ENCODE measurements at regions of chr3 and their contacts with region 1.

Region 1: DNA sequence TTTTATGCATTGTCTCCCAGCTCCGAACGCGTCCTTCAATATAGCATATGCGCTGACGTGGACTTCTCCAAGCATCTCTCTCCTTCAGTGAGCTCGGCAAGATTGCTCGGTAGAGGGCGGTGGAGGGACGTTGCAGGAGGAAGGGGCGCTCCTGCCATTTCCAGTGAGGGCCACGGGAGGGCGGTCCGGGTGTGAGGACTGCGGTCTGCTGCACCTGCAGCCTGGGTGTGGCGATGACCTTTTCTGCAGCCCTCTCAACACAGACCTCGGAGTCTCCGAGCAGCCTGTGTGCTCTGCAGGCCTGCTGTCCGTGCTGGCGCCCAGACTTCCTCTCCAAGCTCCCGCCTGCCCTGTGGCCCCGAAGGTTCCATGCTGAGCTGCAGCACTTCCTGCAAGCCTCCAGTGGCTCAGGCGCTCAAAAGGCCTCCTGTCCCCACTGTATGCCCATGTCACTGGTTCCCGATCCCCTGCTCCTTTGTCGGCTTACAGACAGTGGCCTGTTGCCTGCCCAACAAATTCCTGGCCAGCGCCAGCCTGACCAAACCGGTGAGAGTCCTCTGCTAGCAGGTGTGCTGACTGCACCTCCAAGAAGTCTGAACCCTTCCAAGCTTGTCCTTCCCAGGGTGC is 8.9 kb upstream of the RTP3 start:
- DNase-seq: peak; percentile 97
- H3K4me3 Mint-ChIP-seq: peak overlapping the region; percentile 61
- H3K27ac Mint-ChIP-seq: no peak overlapping the region
- H3K4me1 Mint-ChIP-seq: peaks cover 9% of the 10 kb centered on the region
- H3K27me3 Mint-ChIP-seq: peaks cover 21% of the 10 kb centered on the region

Region 2: DNA sequence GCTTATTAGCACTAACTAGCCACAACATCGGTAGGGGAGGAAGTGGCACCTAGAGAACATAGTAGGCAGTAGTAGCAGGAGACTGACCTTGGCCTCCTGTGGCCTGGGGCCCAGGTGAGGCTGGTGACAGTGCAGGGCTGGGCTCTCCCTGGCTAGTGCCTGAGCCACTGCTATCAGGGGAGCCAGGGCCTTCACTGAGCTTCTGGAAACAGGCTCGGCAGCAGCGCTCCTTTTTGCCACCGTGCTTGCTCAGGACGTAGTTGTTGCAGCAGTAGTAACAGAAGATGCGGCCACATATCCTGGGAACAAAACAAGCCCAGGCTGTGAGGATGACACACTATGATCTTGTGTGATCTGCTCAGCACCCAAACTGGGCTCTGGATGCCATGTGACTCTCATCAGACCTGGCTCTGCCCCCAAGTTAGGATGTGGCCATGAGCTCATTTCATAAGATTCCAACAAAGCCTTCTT is 530.5 kb before region 1 on chr3:
- intact Hi-C with region 1: no loop called
- DNase-seq: no peak
- H3K4me3 Mint-ChIP-seq: no peak overlapping the region
- H3K27ac Mint-ChIP-seq: no peak overlapping the region
- H3K4me1 Mint-ChIP-seq: peaks cover 43% of the 10 kb centered on the region
- H3K27me3 Mint-ChIP-seq: no peaks in the 10 kb centered on the region

Region 3: GRCh38 chr3:46065294-46065721 is 423.5 kb before region 1 on chr3:
- intact Hi-C with region 1: no loop called
- DNase-seq: peak; percentile 93
- H3K4me3 Mint-ChIP-seq: peak overlapping the region; percentile 39
- H3K27ac Mint-ChIP-seq: peak overlapping the region; percentile 68
- H3K4me1 Mint-ChIP-seq: peaks cover 51% of the 10 kb centered on the region
- H3K27me3 Mint-ChIP-seq: peaks cover 53% of the 10 kb centered on the region

Region 4: GRCh38 chr3:46228259-46229242 is 260.3 kb before region 1 on chr3:
- intact Hi-C with region 1: no loop called
- DNase-seq: no peak
- H3K4me3 Mint-ChIP-seq: no peak overlapping the region
- H3K27ac Mint-ChIP-seq: no peak overlapping the region
- H3K4me1 Mint-ChIP-seq: peaks cover 13% of the 10 kb centered on the region
- H3K27me3 Mint-ChIP-seq: peaks cover 65% of the 10 kb centered on the region

Region 5: DNA sequence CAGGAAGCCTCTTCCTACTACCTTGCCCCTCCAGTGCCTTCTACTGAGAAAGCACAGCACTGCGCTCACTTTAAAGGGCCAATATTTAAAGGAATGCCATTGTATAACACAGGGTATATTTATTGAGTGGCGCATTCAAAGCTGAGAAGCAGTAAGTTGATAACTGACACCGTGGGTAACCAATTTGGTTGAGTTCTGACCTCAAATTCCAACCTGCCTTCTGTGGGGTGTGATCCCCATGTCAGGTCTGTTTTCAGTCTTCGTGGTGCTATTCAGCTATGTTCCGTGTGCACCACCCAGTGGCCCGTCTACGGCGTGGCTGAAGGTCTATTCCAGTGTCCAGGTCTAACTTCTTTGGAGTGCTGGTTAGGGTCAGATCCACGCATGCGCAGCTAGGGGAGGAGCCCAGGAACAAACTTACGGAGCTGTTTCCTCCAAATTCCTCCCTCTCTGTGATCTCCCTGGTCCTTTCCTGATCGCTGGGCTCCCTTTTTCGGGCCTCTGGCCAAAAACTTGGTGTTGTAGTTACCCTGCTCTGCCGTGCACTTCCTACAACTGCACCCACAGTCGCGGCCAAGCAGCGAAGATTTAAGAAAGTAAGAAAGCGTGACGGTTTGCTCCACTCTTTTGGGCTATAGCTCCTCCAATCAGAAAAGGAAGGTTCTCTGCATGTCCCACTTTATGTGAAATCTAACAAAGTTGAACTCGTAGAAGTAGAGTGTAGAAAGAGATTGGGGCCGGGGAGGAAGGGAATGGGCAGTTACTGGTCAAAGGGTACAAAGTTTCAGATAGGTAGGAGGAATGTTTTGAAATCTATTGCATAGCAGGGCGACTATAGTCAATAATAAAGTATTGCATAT is 69.6 kb after region 1 on chr3:
- intact Hi-C with region 1: loop called (anchors 1 kb)
- DNase-seq: peak; percentile 88
- H3K4me3 Mint-ChIP-seq: peak overlapping the region; percentile 80
- H3K27ac Mint-ChIP-seq: no peak overlapping the region
- H3K4me1 Mint-ChIP-seq: peaks cover 10% of the 10 kb centered on the region
- H3K27me3 Mint-ChIP-seq: peaks cover 58% of the 10 kb centered on the region

Region 6: GRCh38 chr3:46629551-46630517 is 141.0 kb after region 1 on chr3:
- intact Hi-C with region 1: loop called (anchors 1 kb)
- DNase-seq: peak; percentile 93
- H3K4me3 Mint-ChIP-seq: peak overlapping the region; percentile 66
- H3K27ac Mint-ChIP-seq: peak overlapping the region; percentile 46
- H3K4me1 Mint-ChIP-seq: peaks cover 16% of the 10 kb centered on the region
- H3K27me3 Mint-ChIP-seq: peaks cover 4% of the 10 kb centered on the region

Region 7: DNA sequence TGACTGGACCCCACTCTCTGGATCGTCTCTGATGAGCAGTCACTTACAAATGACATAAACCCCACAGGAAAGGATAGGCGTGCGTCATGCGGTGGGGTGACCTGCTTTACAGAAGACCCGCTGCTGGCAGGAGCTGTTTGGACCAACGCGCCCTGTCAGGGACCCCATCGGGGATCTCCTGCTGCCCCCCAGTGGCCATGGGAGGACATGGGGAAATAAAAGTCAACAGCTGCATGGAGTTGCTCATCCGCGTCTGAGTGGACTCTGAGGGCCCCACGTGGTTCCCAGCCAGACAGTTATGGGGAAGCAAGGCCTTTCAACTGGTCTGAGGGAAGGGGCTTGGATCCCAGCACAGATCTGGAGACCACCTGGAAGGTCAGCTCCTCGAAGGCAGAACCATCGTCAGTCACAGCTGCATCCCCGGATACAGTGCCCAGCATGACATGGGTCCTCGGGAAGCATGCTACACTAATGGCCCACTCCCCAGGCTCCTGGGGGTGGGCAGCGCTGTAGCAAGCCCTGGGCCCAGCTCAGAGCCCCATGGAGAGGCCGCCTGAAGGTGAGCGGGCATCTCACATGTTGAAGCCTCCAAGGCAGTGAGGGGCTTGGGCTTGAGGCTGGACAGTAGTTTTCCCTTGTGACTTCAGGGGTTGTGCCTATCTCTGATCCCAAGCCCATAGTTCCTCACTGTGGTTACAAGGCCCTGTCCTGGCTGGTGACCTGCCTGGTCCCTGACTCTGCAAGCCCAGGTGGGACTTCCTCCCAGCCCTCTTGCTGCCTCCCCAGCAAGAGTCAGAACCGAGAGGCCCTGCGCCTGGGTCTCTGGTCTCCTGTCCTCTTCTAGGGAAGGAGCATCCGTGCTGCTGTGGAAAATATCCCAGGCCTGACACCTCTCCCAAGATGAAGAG is 420.9 kb after region 1 on chr3:
- intact Hi-C with region 1: loop called (anchors 10 kb)
- DNase-seq: peak; percentile 91
- H3K4me3 Mint-ChIP-seq: no peak overlapping the region
- H3K27ac Mint-ChIP-seq: no peak overlapping the region
- H3K4me1 Mint-ChIP-seq: peaks cover 14% of the 10 kb centered on the region
- H3K27me3 Mint-ChIP-seq: no peaks in the 10 kb centered on the region